Activated B cell treated with CpG ODN at 0.5 μM for 24 hours (primary cell): ENCODE measurements at regions of chr18 and their contacts with region 1.

Region 1: GRCh38 chr18:51197661-51198424 is at the start of gene MEX3C:
- DNase-seq: peak; percentile 98
- ATAC-seq: peak; percentile 82
- H3K4me3 Mint-ChIP-seq: peak within 1 kb of the TSS; percentile 96
- H3K27ac Mint-ChIP-seq: peak within 1 kb of the TSS; percentile 97
- H3K4me1 Mint-ChIP-seq: peaks cover 33% of the 10 kb centered on the region
- H3K27me3 Mint-ChIP-seq: no peaks in the 10 kb centered on the region
- CTCF ChIP-seq: no peak
- total RNA-seq, gene MEX3C: 54.2 and 57.4 TPM in 2 replicates

Region 2: GRCh38 chr18:50374753-50375391 is 823.0 kb before region 1 on chr18 and contains the start of gene SKA1:
- CTCF ChIA-PET with region 1: no interaction called
- POLR2A ChIA-PET with region 1: no interaction called
- intact Hi-C with region 1: loop called (anchors 1 kb)
- DNase-seq: peak; percentile 85
- ATAC-seq: peak; percentile 100
- H3K4me3 Mint-ChIP-seq: peak within 1 kb of the TSS; percentile 83
- H3K27ac Mint-ChIP-seq: peak within 1 kb of the TSS; percentile 84
- H3K4me1 Mint-ChIP-seq: peaks cover 14% of the 10 kb centered on the region
- H3K27me3 Mint-ChIP-seq: peaks cover 6% of the 10 kb centered on the region
- CTCF ChIP-seq: no peak
- total RNA-seq, gene SKA1: 0.71 and 1.0 TPM in 2 replicates

Region 3: GRCh38 chr18:50967714-50968661 is 229.9 kb before region 1 on chr18 and contains the start of gene ELAC1:
- CTCF ChIA-PET with region 1: no interaction called
- POLR2A ChIA-PET with region 1: interaction called, 13 read pairs
- intact Hi-C with region 1: loop called (anchors 2 kb)
- DNase-seq: peak; percentile 75
- ATAC-seq: peak; percentile 95
- H3K4me3 Mint-ChIP-seq: peak within 1 kb of the TSS; percentile 92
- H3K27ac Mint-ChIP-seq: peak within 1 kb of the TSS; percentile 89
- H3K4me1 Mint-ChIP-seq: peaks cover 11% of the 10 kb centered on the region
- H3K27me3 Mint-ChIP-seq: no peaks in the 10 kb centered on the region
- CTCF ChIP-seq: no peak
- total RNA-seq, gene ELAC1: 9.7 and 14.0 TPM in 2 replicates

Region 4: GRCh38 chr18:51110073-51110803 is 87.6 kb before region 1 on chr18:
- CTCF ChIA-PET with region 1: no interaction called
- POLR2A ChIA-PET with region 1: interaction called, 6 read pairs
- intact Hi-C with region 1: loop called (anchors 1 kb)
- DNase-seq: peak; percentile 67
- ATAC-seq: peak; percentile 77
- H3K4me3 Mint-ChIP-seq: no peak overlapping the region
- H3K27ac Mint-ChIP-seq: no peak overlapping the region
- H3K4me1 Mint-ChIP-seq: peaks cover 13% of the 10 kb centered on the region
- H3K27me3 Mint-ChIP-seq: no peaks in the 10 kb centered on the region
- CTCF ChIP-seq: peak; percentile 82

Region 5: DNA sequence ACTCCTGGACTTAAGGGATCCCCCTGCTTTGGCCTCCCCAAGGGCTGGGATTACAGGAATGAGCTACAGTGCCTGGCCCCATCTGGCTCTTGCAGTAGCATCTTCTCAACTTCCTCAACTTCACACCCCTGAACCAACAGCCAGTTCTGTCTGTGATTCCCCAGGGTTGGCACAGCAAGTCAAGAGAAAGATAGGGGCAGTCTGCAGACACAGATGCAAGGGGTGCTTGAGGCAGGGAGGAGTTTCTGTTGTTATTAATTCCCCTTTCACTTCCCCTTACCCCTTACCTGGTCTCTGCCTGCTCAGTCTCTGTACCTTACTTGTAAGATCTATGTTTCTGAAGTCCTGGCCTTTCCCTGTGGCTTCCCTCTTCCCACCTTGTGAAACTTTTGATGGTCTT is 53.8 kb after region 1 on chr18:
- CTCF ChIA-PET with region 1: no interaction called
- POLR2A ChIA-PET with region 1: interaction called, 10 read pairs
- intact Hi-C with region 1: loop called (anchors 1 kb)
- DNase-seq: peak; percentile 38
- ATAC-seq: peak; percentile 99
- H3K4me3 Mint-ChIP-seq: no peak overlapping the region
- H3K27ac Mint-ChIP-seq: peak overlapping the region; percentile 86
- H3K4me1 Mint-ChIP-seq: peaks cover 22% of the 10 kb centered on the region
- H3K27me3 Mint-ChIP-seq: no peaks in the 10 kb centered on the region
- CTCF ChIP-seq: no peak

Region 6: DNA sequence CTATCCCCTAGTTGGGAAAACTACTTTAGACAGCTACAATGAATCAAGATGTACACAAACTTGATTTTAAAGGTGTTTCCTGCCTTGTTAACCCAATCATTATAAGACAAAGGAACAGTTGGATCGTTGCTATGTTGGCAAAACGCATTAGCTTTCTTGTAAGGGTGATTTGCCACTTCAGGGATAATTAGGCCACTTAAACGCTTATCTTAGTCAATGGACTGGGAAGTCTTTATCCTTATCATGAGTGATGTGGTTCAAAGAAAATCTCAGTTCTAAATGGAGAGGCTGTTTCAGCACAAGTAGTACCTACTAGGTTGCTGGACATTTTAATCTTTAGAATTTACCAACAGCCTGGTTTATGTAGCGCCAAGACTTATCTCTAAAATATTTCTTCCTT is 405.7 kb after region 1 on chr18:
- CTCF ChIA-PET with region 1: no interaction called
- POLR2A ChIA-PET with region 1: no interaction called
- intact Hi-C with region 1: no loop called
- DNase-seq: no peak
- ATAC-seq: no peak
- H3K4me3 Mint-ChIP-seq: no peak overlapping the region
- H3K27ac Mint-ChIP-seq: no peak overlapping the region
- H3K4me1 Mint-ChIP-seq: no peaks in the 10 kb centered on the region
- H3K27me3 Mint-ChIP-seq: peaks cover 6% of the 10 kb centered on the region
- CTCF ChIP-seq: no peak